ENCODE measurements at regions of chr19 and their contacts with region 1.

Region 1: DNA sequence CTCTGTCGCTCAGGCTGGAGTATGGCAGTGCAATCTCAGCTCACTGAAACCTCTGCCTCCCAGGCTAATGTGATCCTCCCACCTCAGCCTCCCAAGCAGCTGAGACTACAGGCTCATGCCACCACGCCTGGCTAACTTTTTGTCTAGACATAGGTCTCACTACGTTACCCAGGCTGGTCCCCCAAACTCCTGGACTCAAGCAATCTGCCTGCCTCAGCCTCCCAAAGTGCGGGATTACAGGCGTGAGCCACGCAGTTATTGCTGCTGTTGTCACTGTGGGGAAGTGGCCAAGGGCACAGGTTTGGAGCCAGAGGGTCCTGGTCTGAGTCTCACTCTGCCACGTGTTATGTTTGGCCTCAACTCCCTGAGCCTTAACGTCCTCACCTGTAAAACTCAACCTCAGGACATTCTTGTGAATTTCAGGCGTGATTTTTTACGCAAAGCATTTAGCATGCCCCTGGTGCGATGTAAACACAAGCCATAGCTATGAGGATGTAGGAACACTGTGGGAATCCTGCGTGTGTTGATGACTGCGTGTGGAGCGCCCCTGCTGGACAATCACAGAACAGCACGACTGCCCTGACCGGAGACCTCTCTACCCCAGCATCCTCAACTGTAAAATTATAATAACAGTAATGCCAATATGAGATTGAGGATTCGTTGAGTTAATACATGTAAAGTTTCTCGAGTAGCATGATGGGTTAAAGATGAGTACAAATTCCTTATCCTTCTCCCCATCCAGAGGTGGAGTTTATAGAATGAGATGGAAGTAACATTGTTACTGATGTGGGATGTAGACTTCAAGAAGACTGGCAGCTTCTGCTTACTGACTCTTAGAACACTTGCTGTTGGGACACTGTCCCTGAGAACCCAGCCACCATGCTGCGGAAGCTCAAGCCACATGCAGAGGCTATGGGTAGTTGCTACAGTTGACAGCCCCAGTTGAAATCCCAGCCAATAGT is 41.8 kb upstream of the PNMA8B start:
- DNase-seq: no peak
- H3K4me3 ChIP-seq: no peak overlapping the region
- H3K27me3 ChIP-seq: no peaks in the 10 kb centered on the region
- CTCF ChIP-seq: peak; percentile 95

Region 2: DNA sequence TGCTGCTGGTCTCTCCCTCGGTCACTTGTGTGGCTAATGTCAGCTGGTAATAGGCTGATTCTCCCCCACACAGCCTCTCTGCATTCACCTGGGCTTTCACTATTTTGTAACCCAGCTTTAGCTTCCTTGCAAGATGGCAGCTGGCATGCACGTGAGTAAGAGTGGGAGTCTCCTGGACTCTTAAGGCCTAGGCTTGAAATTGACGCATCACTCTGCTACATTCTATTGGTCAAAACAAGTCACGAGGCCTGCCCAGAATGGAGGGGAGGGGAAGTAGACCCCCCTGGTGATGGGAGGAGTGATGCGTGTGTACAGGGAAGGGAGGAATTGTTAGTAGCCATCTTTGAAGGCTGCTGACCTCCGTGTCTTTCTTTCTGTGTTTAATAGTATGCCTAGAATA is 16.8 kb before region 1 on chr19:
- CTCF ChIA-PET with region 1: interaction called, 42 read pairs
- POLR2A ChIA-PET with region 1: no interaction called
- DNase-seq: no peak
- H3K4me3 ChIP-seq: no peak overlapping the region
- H3K27me3 ChIP-seq: no peaks in the 10 kb centered on the region
- CTCF ChIP-seq: no peak

Region 3: DNA sequence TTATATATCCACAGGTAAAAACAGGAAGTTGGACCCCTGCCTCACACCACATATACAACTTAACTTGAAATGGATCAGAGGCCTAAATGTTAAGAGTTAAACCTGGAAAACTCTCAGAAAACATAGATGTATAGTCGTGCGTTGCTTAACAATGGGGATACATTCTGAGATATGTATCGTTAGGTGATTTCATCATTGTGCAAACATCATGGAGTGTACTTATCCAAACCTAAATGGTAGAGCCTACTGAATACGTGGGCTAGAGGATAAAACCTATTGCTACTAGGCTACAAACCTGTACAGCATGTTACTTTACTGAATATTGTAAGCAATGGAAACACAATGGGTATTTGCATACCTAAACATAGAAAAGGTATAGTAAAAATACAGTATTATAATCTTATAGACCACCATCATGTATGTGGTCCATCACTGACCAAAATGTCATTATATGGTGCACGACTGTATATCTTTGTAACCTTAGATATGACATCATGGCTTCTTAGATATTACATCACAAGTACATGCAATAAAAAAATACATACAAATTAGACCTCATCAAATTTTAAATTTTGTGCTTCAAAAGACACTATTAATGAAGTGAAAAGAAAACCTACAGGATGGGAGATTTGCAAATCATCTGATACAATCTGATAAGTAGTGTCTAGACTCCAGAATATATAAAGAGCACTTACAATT is 49.0 kb after region 1 on chr19:
- CTCF ChIA-PET with region 1: no interaction called
- POLR2A ChIA-PET with region 1: no interaction called
- DNase-seq: no peak
- H3K4me3 ChIP-seq: no peak overlapping the region
- H3K27me3 ChIP-seq: no peaks in the 10 kb centered on the region; the same call in 1 of the 2 replicates
- CTCF ChIP-seq: no peak